ENCODE measurements at regions of chr10 and their contacts with region 1.

Region 1: DNA sequence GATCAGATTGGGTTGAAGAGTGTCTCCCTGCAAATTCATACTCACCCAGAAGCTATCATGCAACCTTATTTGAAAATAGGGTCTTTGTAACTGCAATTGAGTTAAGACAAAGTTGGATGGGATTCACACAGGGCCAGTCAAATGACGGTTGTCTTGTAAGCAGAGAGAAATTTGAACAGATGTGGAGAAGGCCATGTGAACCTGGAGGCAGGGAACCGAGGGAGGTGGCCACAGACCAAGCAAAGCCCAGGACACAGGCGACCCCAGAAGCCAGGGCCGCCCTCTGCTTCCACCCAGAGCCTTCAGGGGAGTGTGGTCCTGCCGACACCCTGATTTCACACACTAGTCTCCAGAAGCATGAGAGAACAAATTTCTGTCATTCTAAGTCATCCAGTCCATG is 140.8 kb downstream of the SFMBT2 start:
- DNase-seq: no peak
- H3K4me3 Mint-ChIP-seq: peak overlapping the region; percentile 15
- H3K27ac Mint-ChIP-seq: peak overlapping the region; percentile 94
- H3K4me1 Mint-ChIP-seq: peaks cover 65% of the 10 kb centered on the region
- H3K27me3 Mint-ChIP-seq: no peaks in the 10 kb centered on the region

Region 2: DNA sequence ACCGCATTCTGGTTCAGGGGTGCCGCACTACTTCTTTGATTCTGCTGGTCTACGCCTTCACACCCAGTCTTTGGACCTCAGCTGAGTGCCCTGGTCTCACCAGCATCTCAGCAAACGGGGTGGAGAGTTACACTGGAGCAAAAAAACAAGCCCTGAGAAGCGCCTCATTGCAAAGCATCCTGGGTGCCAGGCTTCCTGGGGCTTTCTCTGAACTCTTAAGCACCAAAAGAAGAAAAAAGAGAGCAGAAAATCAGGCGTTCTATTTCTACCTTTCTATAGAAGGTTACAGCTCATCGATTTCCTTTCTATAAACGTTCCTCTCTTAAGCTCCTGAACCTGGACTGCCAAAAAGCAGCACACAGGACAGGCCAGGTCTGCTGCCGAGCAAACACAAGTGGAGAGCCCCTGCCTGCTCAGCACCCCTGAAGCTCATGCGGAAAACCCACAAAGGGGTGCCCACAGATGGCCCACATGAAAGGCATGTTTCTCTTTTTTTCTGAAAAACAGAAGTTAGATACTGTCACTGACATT is 77.1 kb before region 1 on chr10:
- intact Hi-C with region 1: loop called (anchors 1 kb)
- DNase-seq: peak; percentile 68
- H3K4me3 Mint-ChIP-seq: peak overlapping the region; percentile 76
- H3K27ac Mint-ChIP-seq: peak overlapping the region; percentile 97
- H3K4me1 Mint-ChIP-seq: peaks cover 73% of the 10 kb centered on the region
- H3K27me3 Mint-ChIP-seq: peaks cover 1% of the 10 kb centered on the region

Region 3: GRCh38 chr10:7211857-7212577 is 58.0 kb before region 1 on chr10:
- intact Hi-C with region 1: no loop called
- DNase-seq: no peak
- H3K4me3 Mint-ChIP-seq: no peak overlapping the region
- H3K27ac Mint-ChIP-seq: no peak overlapping the region
- H3K4me1 Mint-ChIP-seq: peaks cover 17% of the 10 kb centered on the region
- H3K27me3 Mint-ChIP-seq: no peaks in the 10 kb centered on the region

Region 4: GRCh38 chr10:7314170-7314569 is 44.2 kb after region 1 on chr10:
- intact Hi-C with region 1: loop called (anchors 1 kb)
- DNase-seq: no peak
- H3K4me3 Mint-ChIP-seq: no peak overlapping the region
- H3K27ac Mint-ChIP-seq: peak overlapping the region; percentile 89
- H3K4me1 Mint-ChIP-seq: peaks cover 45% of the 10 kb centered on the region
- H3K27me3 Mint-ChIP-seq: no peaks in the 10 kb centered on the region

Region 5: GRCh38 chr10:7388602-7389001 is 118.6 kb after region 1 on chr10:
- intact Hi-C with region 1: no loop called
- DNase-seq: peak; percentile 19
- H3K4me3 Mint-ChIP-seq: peak overlapping the region; percentile 66
- H3K27ac Mint-ChIP-seq: peak overlapping the region; percentile 95
- H3K4me1 Mint-ChIP-seq: peaks cover 48% of the 10 kb centered on the region
- H3K27me3 Mint-ChIP-seq: no peaks in the 10 kb centered on the region